Colonic mucosa (tissue), 4 donors: ENCODE measurements at regions of chr1 and their contacts with region 1.

Region 1: GRCh38 chr1:24027838-24028468 is 47.8 kb upstream of the SRSF10 start:
- DNase-seq: no peak
- H3K4me3 ChIP-seq: no peak overlapping the region
- H3K27ac ChIP-seq: no peak overlapping the region
- H3K4me1 ChIP-seq: no peaks in the 10 kb centered on the region
- H3K27me3 ChIP-seq: no peaks in the 10 kb centered on the region
- CTCF ChIP-seq: peak; percentile 41

Region 2: DNA sequence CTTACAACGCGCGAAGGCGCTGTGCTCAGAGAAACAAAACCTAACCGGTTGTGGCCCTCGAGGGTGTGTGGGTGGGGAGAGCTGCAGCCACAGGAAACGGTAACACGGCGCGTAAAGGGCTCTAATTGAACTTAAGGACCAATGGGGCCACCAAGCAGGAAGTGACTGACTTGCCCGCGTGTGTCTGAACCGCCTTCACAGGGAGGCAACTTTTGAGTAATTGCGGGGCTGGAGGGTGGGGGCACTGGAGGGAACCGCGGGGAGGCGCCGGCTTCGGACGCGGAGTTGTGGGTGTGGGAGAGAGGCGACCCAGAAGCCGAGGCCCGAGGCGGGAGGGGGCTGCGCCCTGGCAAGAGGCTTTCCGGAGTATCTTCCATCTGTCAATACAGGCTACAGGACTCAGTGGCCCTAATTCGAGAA is 68.9 kb before region 1 on chr1:
- intact Hi-C with region 1: loop called (anchors 5 kb)
- DNase-seq: peak; percentile 93
- H3K4me3 ChIP-seq: peak overlapping the region; percentile 71
- H3K27ac ChIP-seq: peak overlapping the region; percentile 97
- H3K4me1 ChIP-seq: no peaks in the 10 kb centered on the region
- H3K27me3 ChIP-seq: no peaks in the 10 kb centered on the region
- CTCF ChIP-seq: no peak